Activated CD8-positive, alpha-beta T cell treated with anti-CD3 and anti-CD28 coated beads, Interleukin-2, amount 10 ng/mL, durations not matched to agents 7 days and 5 days (primary cell): ENCODE measurements at regions of chr15 and their contacts with region 1.

Region 1: GRCh38 chr15:75801859-75802593 is 41.2 kb upstream of the UBE2Q2 start:
- DNase-seq: peak; percentile 87
- ATAC-seq: peak; percentile 99
- H3K4me3 Mint-ChIP-seq: no peak overlapping the region
- H3K27ac Mint-ChIP-seq: no peak overlapping the region
- H3K4me1 Mint-ChIP-seq: peaks cover 9% of the 10 kb centered on the region
- H3K27me3 Mint-ChIP-seq: peaks cover 51% of the 10 kb centered on the region

Region 2: GRCh38 chr15:75684642-75685041 is 117.4 kb before region 1 on chr15:
- CTCF ChIA-PET with region 1: interaction called, 30 read pairs
- POLR2A ChIA-PET with region 1: no interaction called
- DNase-seq: no peak
- ATAC-seq: no peak
- H3K4me3 Mint-ChIP-seq: no peak overlapping the region
- H3K27ac Mint-ChIP-seq: no peak overlapping the region
- H3K4me1 Mint-ChIP-seq: peaks cover 2% of the 10 kb centered on the region
- H3K27me3 Mint-ChIP-seq: no peaks in the 10 kb centered on the region

Region 3: DNA sequence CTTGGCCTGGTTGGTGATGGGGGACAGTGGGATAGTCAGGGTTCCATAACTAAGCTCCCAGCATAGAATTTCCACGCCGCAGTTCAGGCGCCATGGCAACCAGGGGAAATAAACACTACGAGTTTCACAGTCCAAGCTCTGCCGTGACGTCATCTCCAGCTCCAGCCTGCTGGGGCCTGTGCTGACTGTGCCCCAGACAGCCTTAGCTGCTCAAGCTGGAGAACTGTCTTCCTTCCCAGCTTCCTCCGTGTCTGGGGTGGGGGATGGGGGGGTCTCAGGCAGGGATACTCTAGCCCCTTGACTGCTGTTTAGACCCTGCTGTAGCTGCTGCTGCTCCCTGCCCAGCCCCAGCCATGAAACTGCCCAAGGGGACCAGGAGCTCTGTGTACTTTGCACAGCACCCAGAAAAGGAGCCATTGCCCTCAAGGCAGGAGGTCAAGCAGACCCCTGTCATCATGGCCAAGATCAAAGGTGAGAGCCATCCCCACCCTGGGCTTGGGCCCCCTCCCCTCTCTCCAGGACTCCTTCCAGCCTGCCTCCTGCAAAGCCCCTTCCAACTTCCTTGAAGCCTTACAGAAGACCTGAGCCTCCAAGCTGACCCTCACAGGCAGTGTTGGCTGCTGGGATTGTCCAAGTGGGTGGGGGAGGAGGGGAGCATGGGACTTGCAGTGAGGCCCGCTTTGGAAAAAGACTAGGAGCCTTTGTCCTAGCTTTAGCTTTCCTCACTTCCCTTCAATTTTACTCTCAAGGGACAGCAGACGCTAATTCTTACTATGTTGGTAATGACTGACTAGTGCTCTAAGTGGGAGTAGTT is 78.0 kb before region 1 on chr15:
- CTCF ChIA-PET with region 1: interaction called, 32 read pairs
- POLR2A ChIA-PET with region 1: no interaction called
- DNase-seq: peak; percentile 53
- ATAC-seq: peak; percentile 73
- H3K4me3 Mint-ChIP-seq: no peak overlapping the region
- H3K27ac Mint-ChIP-seq: no peak overlapping the region
- H3K4me1 Mint-ChIP-seq: peaks cover 3% of the 10 kb centered on the region
- H3K27me3 Mint-ChIP-seq: peaks cover 5% of the 10 kb centered on the region

Region 4: GRCh38 chr15:75732809-75733451 is 69.1 kb before region 1 on chr15:
- CTCF ChIA-PET with region 1: interaction called, 32 read pairs
- POLR2A ChIA-PET with region 1: no interaction called
- DNase-seq: peak; percentile 73
- ATAC-seq: peak; percentile 67
- H3K4me3 Mint-ChIP-seq: no peak overlapping the region
- H3K27ac Mint-ChIP-seq: no peak overlapping the region
- H3K4me1 Mint-ChIP-seq: peaks cover 19% of the 10 kb centered on the region
- H3K27me3 Mint-ChIP-seq: peaks cover 16% of the 10 kb centered on the region

Region 5: DNA sequence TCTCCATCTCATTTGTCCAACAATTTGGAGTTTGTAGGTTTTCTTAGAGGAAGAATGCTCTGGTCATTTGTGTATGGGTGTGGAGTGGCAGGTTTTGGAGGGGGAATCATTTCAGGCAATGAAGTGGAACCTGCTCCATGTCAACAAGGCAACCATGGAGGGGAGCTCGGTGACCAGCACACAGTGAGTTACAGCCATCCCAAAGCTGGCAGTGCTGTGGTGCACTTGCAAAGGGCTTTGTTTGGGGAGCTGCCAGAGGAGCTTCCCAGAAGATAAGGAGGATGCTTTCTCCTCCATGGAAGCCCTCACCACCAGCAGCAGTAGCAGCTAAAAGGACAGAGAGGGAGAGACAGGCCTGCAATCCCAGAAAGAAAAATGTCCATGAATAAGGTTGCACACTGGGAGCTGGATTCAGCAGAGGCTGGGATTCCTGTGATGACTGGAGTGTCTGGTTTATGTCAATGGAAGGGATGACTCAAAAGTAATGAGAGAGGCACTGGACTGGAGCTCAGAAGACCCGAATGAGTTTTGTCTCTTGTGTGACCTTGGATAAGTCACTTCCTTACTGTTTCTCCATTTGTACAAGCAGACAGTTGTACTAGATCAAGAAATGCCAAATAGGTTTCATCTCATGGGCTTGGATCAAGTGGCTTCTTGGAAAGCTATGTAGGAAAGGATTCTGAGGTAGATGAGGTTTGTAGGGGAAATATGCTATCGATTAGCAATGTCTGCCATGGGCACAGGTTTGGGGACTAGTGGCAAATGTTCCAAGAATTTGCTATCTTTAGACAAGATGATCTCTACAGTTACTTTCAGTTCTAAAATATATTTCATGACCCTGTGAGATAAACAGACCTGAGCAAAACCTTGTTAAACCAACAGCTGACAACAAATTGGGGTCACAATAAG is 14.0 kb after region 1 on chr15:
- CTCF ChIA-PET with region 1: interaction called, 11 read pairs
- POLR2A ChIA-PET with region 1: no interaction called
- DNase-seq: no peak
- ATAC-seq: no peak
- H3K4me3 Mint-ChIP-seq: no peak overlapping the region
- H3K27ac Mint-ChIP-seq: peak overlapping the region; percentile 63
- H3K4me1 Mint-ChIP-seq: peaks cover 18% of the 10 kb centered on the region
- H3K27me3 Mint-ChIP-seq: peaks cover 2% of the 10 kb centered on the region